ENCODE measurements at regions of chr10 and their contacts with region 1.

Region 1: GRCh38 chr10:131961777-131962662 is 19.7 kb downstream of the BNIP3 start:
- DNase-seq: peak; percentile 73
- H3K4me3 ChIP-seq: peak overlapping the region; percentile 56 to 62
- H3K27ac ChIP-seq: peak overlapping the region; percentile 78 to 98
- H3K4me1 ChIP-seq: peaks cover 7 to 27% of the 10 kb centered on the region in 2 experiments; a peak in 2 of 4 replicates
- H3K27me3 ChIP-seq: no peaks in the 10 kb centered on the region
- CTCF ChIP-seq: no peak
- EP300 ChIP-seq: no peak
- RAD21 ChIP-seq: no peak

Region 2: GRCh38 chr10:131885391-131886161 is 76.4 kb before region 1 on chr10:
- CTCF ChIA-PET with region 1: interaction called, 14 read pairs
- POLR2A ChIA-PET with region 1: no interaction called
- DNase-seq: peak; percentile 93
- H3K4me3 ChIP-seq: no peak overlapping the region; a peak in 1 of 4 replicates
- H3K27ac ChIP-seq: no peak overlapping the region
- H3K4me1 ChIP-seq: no peaks in the 10 kb centered on the region; a peak in 1 of 4 replicates
- H3K27me3 ChIP-seq: no peaks in the 10 kb centered on the region
- CTCF ChIP-seq: peak; percentile 81
- EP300 ChIP-seq: no peak
- RAD21 ChIP-seq: peak; percentile 89

Region 3: DNA sequence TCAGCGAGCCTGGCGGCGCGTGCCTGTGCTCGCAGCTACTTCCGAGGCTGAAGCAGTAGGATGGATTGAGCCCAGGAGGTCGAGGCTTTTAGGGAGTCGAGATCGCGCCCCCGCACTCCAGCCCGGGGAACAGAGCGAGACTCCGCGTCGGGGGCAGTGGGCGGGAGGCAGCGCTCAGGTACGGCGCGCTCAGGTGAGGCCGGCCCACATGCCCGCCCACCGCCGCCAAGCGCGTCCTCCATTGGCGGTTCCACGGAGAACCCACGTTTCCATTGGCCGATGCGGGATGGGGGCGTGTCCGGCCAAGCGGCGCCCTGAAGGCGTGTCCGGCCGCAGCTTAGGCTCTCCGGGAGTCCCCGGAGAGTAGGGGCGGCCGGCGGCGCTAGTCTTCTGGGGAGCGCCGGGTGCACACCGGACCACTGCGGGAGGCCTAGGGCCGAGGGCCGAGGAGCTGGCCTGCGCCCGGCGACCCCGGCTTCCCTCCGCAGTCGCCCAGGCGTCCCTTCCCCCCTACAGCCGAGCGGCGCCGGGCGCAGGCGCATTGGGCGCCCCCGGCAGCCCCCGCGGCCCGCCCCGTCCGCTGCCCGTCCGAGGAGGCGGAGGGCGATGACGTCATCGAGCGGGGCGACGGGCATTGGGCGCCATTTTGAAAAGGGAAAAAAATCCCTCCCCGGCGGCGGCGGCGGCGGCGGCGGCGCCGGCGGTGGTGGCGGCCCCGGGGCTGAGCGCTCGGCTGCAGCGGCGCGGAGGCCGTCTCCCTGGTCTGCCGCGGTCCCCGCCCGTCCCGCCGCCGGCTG is 61.5 kb before region 1 on chr10 and contains the start of gene PPP2R2D:
- CTCF ChIA-PET with region 1: interaction called, 3 read pairs
- POLR2A ChIA-PET with region 1: interaction called, 11 read pairs
- DNase-seq: peak; percentile 99
- H3K4me3 ChIP-seq: peak within 1 kb of the TSS; percentile 83 to 93
- H3K27ac ChIP-seq: peak within 1 kb of the TSS; percentile 54 to 88
- H3K4me1 ChIP-seq: peaks cover 18 to 20% of the 10 kb centered on the region in 2 experiments; a peak in 3 of 4 replicates
- H3K27me3 ChIP-seq: peaks cover 18% of the 10 kb centered on the region; the same call in 1 of the 2 replicates
- CTCF ChIP-seq: no peak
- EP300 ChIP-seq: no peak
- RAD21 ChIP-seq: no peak
- polyA plus RNA-seq, gene PPP2R2D: 24.3 and 25.1 TPM in 2 replicates

Region 4: GRCh38 chr10:131972474-131973071 is 10.6 kb after region 1 on chr10:
- CTCF ChIA-PET with region 1: interaction called, 4 read pairs
- POLR2A ChIA-PET with region 1: interaction called, 12 read pairs
- DNase-seq: peak; percentile 77
- H3K4me3 ChIP-seq: no peak overlapping the region
- H3K27ac ChIP-seq: peak overlapping the region in 1 of 2 experiments; percentile 39; a peak in 2 of 4 replicates
- H3K4me1 ChIP-seq: peaks cover 0 to 20% of the 10 kb centered on the region in 2 experiments; a peak in 2 of 4 replicates
- H3K27me3 ChIP-seq: no peaks in the 10 kb centered on the region
- CTCF ChIP-seq: no peak
- EP300 ChIP-seq: no peak
- RAD21 ChIP-seq: no peak

Region 5: GRCh38 chr10:131981429-131982184 is 19.6 kb after region 1 on chr10 and contains the start of gene BNIP3:
- CTCF ChIA-PET with region 1: interaction called, 5 read pairs
- POLR2A ChIA-PET with region 1: interaction called, 10 read pairs
- DNase-seq: peak; percentile 100
- H3K4me3 ChIP-seq: peak within 1 kb of the TSS; percentile 87 to 91
- H3K27ac ChIP-seq: peak within 1 kb of the TSS; percentile 30 to 82; a peak in 3 of 4 replicates
- H3K4me1 ChIP-seq: peaks cover 10 to 21% of the 10 kb centered on the region in 2 experiments; a peak in 2 of 4 replicates
- H3K27me3 ChIP-seq: no peaks in the 10 kb centered on the region
- CTCF ChIP-seq: peak; percentile 1; the same call in 1 of the 2 replicates
- EP300 ChIP-seq: no peak
- RAD21 ChIP-seq: no peak
- polyA plus RNA-seq, gene BNIP3: 40.3 and 57.2 TPM in 2 replicates